Stomach (tissue), 19 donors: ENCODE measurements at regions of chr4 and their contacts with region 1.

Region 1: GRCh38 chr4:119559044-119559647 is 69.5 kb downstream of the PDE5A start:
- DNase-seq: peak in 1 of 2 donors; percentile 77
- H3K4me3 ChIP-seq: no peak overlapping the region
- H3K27ac ChIP-seq: no peak overlapping the region
- H3K4me1 ChIP-seq: no peaks in the 10 kb centered on the region
- H3K27me3 ChIP-seq: no peaks in the 10 kb centered on the region
- CTCF ChIP-seq: peak in 3 of 7 experiments; percentile 26 to 35 (median 34)
- EP300 ChIP-seq: no peak
- POLR2A ChIP-seq: no peak

Region 2: GRCh38 chr4:119810001-119810400 is 250.9 kb after region 1 on chr4:
- intact Hi-C with region 1: no loop called
- DNase-seq: no peak
- H3K4me3 ChIP-seq: no peak overlapping the region
- H3K27ac ChIP-seq: no peak overlapping the region
- H3K4me1 ChIP-seq: no peaks in the 10 kb centered on the region
- H3K27me3 ChIP-seq: no peaks in the 10 kb centered on the region
- CTCF ChIP-seq: no peak
- EP300 ChIP-seq: no peak
- POLR2A ChIP-seq: no peak

Region 3: GRCh38 chr4:120049732-120050494 is 490.8 kb after region 1 on chr4:
- intact Hi-C with region 1: loop called (anchors 10 kb)
- DNase-seq: peak; percentile 79 to 94
- H3K4me3 ChIP-seq: peak overlapping the region in 3 of 4 donors; percentile 7 to 28 (median 19)
- H3K27ac ChIP-seq: peak overlapping the region in 4 of 5 donors; percentile 6 to 66 (median 32)
- H3K4me1 ChIP-seq: peaks cover 0 to 21% (median 5%) of the 10 kb centered on the region in 4 donors
- H3K27me3 ChIP-seq: no peaks in the 10 kb centered on the region
- CTCF ChIP-seq: peak in 5 of 7 experiments; percentile 67 to 84 (median 79)
- EP300 ChIP-seq: no peak
- POLR2A ChIP-seq: no peak